ENCODE measurements at regions of chr6 and their contacts with region 1.

Region 1: DNA sequence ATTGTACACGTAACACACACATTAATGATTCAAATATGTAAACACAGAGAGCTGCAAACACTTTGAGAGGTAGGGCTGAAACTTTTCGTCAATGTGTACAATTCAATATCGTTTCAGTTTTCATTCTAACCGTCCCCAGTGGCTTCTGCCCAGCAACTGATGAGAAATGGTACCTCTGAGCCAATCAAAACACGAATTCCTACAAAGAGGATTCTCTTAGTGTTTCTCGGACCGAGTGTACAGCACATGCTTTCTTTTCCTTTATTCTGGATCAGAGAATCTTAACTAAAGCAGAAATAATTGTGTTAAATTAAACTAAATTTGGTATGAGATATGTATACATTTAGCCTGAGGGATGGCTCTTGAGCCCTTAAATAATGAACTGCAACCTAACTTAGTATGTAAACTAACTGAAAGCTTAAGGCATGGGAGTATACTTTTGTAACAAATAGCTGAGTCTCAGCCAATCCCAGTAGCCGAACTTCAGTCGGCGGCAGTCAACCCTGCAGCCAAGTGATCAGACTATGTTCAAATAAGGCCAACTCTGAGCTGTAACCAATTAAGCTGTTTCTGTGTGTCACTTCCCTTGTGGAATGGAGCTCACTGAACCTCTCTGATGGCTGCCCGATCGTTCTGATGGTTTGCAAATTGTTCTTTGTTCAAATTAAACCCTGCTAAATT is 16.1 kb downstream of the BTN2A1 start:
- DNase-seq: peak; percentile 98
- H3K4me3 ChIP-seq: peak overlapping the region; percentile 35 to 73 (median 39)
- H3K27ac ChIP-seq: peak overlapping the region; percentile 90
- H3K4me1 ChIP-seq: peaks cover 23% of the 10 kb centered on the region
- H3K27me3 ChIP-seq: no peaks in the 10 kb centered on the region
- CTCF ChIP-seq: no peak
- POLR2A ChIP-seq: peak; percentile 75

Region 2: DNA sequence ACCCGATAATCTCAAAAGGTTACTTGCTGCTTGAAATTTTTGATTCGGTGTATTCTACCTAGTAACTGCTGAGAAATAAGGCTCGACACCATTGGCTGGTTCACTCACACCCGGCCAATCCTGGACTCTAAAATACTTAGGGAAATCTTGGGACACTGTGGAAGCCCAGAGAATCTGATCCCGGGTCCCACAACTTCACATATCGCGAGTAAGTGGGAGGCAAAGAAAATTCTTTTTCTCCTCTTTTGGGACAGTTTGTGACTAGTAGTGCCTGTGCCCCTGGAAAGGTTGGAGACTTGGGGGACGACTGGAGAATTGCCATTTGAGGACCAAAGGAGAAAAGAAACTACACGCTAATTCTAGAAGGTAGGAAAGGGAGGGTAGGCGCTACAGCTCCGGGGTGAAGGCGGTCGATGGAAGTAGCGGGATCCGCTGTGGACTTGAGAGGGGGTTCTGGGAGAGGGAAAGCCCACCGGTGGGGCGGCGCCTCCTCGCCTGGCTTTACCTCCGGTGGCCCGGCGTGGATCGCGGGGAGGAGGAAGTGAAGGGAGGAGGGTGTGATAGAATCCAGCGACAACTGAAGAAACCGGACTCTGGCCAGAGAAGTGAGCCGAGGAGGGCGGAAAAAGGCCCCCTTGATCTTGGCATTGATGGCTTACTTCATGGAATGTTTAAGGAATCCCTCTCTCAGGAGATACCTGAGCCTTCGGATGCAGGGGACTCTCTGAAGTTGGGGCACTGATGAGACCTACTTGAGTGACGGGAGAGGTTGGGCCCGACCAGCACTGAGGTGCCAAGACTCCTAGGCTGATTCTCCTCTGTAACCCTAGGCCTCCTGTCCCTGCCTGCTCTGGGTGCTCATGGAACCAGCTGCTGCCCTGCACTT is 52.4 kb before region 1 on chr6:
- CTCF ChIA-PET with region 1: no interaction called
- POLR2A ChIA-PET with region 1: no interaction called
- dilution Hi-C with region 1: no loop called
- intact Hi-C with region 1: no loop called
- DNase-seq: peak; percentile 95
- H3K4me3 ChIP-seq: peak overlapping the region; percentile 41 to 75 (median 66)
- H3K27ac ChIP-seq: peak overlapping the region; percentile 65
- H3K4me1 ChIP-seq: peaks cover 6% of the 10 kb centered on the region
- H3K27me3 ChIP-seq: no peaks in the 10 kb centered on the region
- CTCF ChIP-seq: no peak
- POLR2A ChIP-seq: no peak

Region 3: GRCh38 chr6:26457806-26458688 is 15.9 kb before region 1 on chr6 and contains the start of gene BTN2A1:
- CTCF ChIA-PET with region 1: no interaction called
- POLR2A ChIA-PET with region 1: interaction called, 4 read pairs
- dilution Hi-C with region 1: no loop called
- intact Hi-C with region 1: loop called (anchors 1 kb)
- DNase-seq: peak; percentile 97
- H3K4me3 ChIP-seq: peak within 1 kb of the TSS; percentile 92 to 99 (median 99)
- H3K27ac ChIP-seq: peak within 1 kb of the TSS; percentile 92
- H3K4me1 ChIP-seq: peaks cover 20% of the 10 kb centered on the region
- H3K27me3 ChIP-seq: no peaks in the 10 kb centered on the region
- CTCF ChIP-seq: no peak
- POLR2A ChIP-seq: peak; percentile 18
- total RNA-seq, gene BTN2A1: 23.4 and 25.1 TPM in 2 replicates

Region 4: GRCh38 chr6:26493258-26493657 is 19.4 kb after region 1 on chr6:
- CTCF ChIA-PET with region 1: no interaction called
- POLR2A ChIA-PET with region 1: no interaction called
- dilution Hi-C with region 1: no loop called
- intact Hi-C with region 1: loop called (anchors 2 kb)
- DNase-seq: peak; percentile 19
- H3K4me3 ChIP-seq: no peak overlapping the region
- H3K27ac ChIP-seq: no peak overlapping the region
- H3K4me1 ChIP-seq: no peaks in the 10 kb centered on the region
- H3K27me3 ChIP-seq: peaks cover 11 to 37% of the 10 kb centered on the region in 2 experiments
- CTCF ChIP-seq: peak; percentile 4 to 28
- POLR2A ChIP-seq: no peak

Region 5: DNA sequence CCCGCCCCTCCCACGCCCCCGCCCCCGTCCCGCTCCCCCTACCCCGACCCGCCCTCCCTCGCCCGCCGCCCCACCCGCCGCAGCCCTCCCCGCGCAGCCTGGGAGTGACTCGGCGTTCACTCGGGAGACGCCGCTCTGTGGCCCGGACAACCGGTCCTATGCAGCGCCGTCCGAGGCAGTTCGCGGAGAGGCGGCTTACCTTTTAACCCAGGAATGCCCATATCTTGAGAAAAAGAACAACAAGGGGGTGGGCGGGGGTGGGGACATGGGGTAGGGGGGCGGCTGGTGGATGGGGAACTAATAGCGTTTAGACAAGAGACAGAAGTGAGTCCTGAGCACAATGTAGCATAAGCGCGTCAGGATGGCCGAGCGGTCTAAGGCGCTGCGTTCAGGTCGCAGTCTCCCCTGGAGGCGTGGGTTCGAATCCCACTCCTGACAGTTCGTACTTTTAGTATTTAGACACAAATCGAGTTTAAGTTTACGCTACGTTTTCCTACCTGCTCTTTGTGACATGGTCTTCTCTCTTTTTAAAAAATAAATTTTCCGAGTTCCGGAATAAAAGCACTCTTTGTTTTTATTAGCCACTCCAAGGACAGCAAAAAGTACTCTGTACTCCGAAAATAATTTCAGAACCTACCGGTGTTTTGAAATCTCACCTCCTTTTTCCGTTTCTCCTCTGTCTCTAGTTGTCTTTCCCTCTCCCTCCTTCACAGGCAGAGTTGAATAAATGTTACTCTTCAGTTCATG is 47.1 kb after region 1 on chr6:
- CTCF ChIA-PET with region 1: interaction called, 5 read pairs
- POLR2A ChIA-PET with region 1: interaction called, 4 read pairs
- dilution Hi-C with region 1: no loop called
- intact Hi-C with region 1: loop called (anchors 1 kb)
- DNase-seq: peak; percentile 88
- H3K4me3 ChIP-seq: peak overlapping the region; percentile 46 to 82 (median 79)
- H3K27ac ChIP-seq: peak overlapping the region; percentile 76
- H3K4me1 ChIP-seq: peaks cover 10% of the 10 kb centered on the region
- H3K27me3 ChIP-seq: no peaks in the 10 kb centered on the region
- CTCF ChIP-seq: no peak
- POLR2A ChIP-seq: peak; percentile 68

Region 6: GRCh38 chr6:26532699-26533531 is 59.0 kb after region 1 on chr6:
- CTCF ChIA-PET with region 1: no interaction called
- POLR2A ChIA-PET with region 1: interaction called, 4 read pairs
- dilution Hi-C with region 1: no loop called
- intact Hi-C with region 1: loop called (anchors 1 kb)
- DNase-seq: peak; percentile 96
- H3K4me3 ChIP-seq: peak overlapping the region; percentile 65 to 74 (median 65)
- H3K27ac ChIP-seq: peak overlapping the region; percentile 4
- H3K4me1 ChIP-seq: peaks cover 14% of the 10 kb centered on the region
- H3K27me3 ChIP-seq: no peaks in the 10 kb centered on the region
- CTCF ChIP-seq: no peak
- POLR2A ChIP-seq: no peak

Region 7: GRCh38 chr6:26537846-26538571 is 64.1 kb after region 1 on chr6 and contains the start of gene HMGN4:
- CTCF ChIA-PET with region 1: no interaction called
- POLR2A ChIA-PET with region 1: interaction called, 4 read pairs
- dilution Hi-C with region 1: no loop called
- intact Hi-C with region 1: loop called (anchors 1 kb)
- DNase-seq: peak; percentile 93
- H3K4me3 ChIP-seq: peak within 1 kb of the TSS; percentile 87 to 99 (median 98)
- H3K27ac ChIP-seq: peak within 1 kb of the TSS; percentile 85
- H3K4me1 ChIP-seq: peaks cover 21% of the 10 kb centered on the region
- H3K27me3 ChIP-seq: no peaks in the 10 kb centered on the region
- CTCF ChIP-seq: no peak
- POLR2A ChIP-seq: no peak
- total RNA-seq, gene HMGN4: 33.7 and 36.9 TPM in 2 replicates

Measured in endothelial cell of umbilical vein (primary cell).